Left ventricle myocardium inferior (tissue), 1 donor: ENCODE measurements at regions of chr15 and their contacts with region 1.

Region 1: DNA sequence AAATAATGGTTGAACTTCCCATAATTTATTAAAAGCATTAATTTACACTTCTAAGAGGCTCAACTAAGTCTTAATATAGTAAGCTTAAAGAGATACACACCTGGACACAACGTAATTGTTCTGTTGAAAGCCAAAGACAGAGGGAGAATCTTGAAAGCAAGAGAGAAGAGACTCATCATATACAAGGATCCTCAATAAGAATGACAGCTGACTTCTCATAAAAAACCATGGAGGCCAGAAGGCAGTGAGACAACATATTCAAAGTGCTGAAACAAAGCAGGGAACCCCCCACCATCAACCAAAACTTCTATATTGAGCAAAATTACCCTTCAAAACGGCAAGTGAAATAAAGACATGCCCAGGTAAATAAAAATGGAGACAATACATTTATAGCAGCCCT is 16.6 kb upstream of the GABRG3 start:
- DNase-seq: no peak
- H3K4me3 ChIP-seq: no peak overlapping the region
- H3K27ac ChIP-seq: no peak overlapping the region
- H3K4me1 ChIP-seq: no peaks in the 10 kb centered on the region
- H3K27me3 ChIP-seq: no peaks in the 10 kb centered on the region
- CTCF ChIP-seq: no peak

Region 2: DNA sequence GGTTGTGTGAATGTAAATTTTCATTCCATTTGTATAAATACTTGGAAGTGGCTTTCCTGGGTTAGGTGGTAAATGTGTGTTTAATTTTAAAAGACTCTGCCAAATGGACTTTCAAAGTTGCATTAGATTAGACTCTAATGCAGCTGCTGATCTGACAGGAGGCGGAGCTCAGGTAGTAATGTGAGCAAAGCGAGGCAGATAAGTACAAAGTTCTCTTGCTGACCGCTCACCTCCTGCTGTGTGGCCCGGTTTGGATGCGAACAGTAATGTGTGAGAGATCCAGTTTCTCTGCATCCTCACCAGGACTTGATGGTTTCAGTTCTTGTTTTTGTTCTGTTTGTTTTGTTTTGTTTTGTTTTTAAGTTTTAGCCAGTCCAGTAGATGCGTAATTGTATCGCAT is 122.5 kb before region 1 on chr15:
- intact Hi-C with region 1: no loop called
- DNase-seq: no peak
- H3K4me3 ChIP-seq: no peak overlapping the region
- H3K27ac ChIP-seq: no peak overlapping the region
- H3K4me1 ChIP-seq: no peaks in the 10 kb centered on the region
- H3K27me3 ChIP-seq: no peaks in the 10 kb centered on the region
- CTCF ChIP-seq: no peak

Region 3: DNA sequence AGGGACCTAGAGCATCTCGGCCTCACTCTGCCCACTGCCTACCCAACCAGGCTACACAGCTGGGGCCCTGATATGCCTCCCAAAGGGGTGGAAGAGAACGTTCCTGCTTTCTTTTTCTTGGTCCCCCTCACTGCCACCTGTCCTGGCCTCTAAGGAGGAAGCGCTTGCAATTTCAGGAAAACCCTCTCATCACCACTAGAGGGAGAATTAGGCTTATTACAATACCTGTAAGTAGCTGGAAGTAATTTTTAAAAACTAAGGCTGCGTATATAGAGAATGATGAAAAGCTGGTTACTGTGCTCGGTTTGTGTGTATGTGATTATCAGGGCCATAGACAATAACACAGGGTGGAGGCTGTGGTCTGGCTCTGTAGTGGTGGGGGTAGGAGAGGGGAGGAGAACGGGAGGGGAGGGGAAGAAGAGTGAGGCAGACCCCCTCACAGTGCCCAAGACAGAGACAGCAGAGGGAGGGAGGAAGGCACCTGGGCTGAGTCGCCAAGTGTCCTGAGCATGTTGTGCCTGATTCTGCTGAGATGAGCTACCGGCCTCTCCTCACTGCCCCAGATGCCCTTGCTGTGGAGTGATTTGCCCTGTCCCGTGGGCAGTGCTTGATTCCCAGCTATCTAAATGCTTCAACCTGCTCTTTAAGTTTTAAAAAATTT is 19.8 kb after region 1 on chr15:
- intact Hi-C with region 1: loop called (anchors 2 kb)
- DNase-seq: no peak
- H3K4me3 ChIP-seq: no peak overlapping the region
- H3K27ac ChIP-seq: no peak overlapping the region
- H3K4me1 ChIP-seq: no peaks in the 10 kb centered on the region
- H3K27me3 ChIP-seq: peaks cover 53% of the 10 kb centered on the region
- CTCF ChIP-seq: peak; percentile 33

Region 4: GRCh38 chr15:27017168-27017809 is 62.9 kb after region 1 on chr15:
- intact Hi-C with region 1: no loop called
- DNase-seq: no peak
- H3K4me3 ChIP-seq: no peak overlapping the region
- H3K27ac ChIP-seq: no peak overlapping the region
- H3K4me1 ChIP-seq: no peaks in the 10 kb centered on the region
- H3K27me3 ChIP-seq: peaks cover 30% of the 10 kb centered on the region
- CTCF ChIP-seq: peak; percentile 69

Region 5: GRCh38 chr15:27292641-27293040 is 338.2 kb after region 1 on chr15:
- intact Hi-C with region 1: no loop called
- DNase-seq: no peak
- H3K4me3 ChIP-seq: no peak overlapping the region
- H3K27ac ChIP-seq: no peak overlapping the region
- H3K4me1 ChIP-seq: no peaks in the 10 kb centered on the region
- H3K27me3 ChIP-seq: peaks cover 5% of the 10 kb centered on the region
- CTCF ChIP-seq: no peak